ENCODE measurements at regions of chr5 and their contacts with region 1.

Region 1: DNA sequence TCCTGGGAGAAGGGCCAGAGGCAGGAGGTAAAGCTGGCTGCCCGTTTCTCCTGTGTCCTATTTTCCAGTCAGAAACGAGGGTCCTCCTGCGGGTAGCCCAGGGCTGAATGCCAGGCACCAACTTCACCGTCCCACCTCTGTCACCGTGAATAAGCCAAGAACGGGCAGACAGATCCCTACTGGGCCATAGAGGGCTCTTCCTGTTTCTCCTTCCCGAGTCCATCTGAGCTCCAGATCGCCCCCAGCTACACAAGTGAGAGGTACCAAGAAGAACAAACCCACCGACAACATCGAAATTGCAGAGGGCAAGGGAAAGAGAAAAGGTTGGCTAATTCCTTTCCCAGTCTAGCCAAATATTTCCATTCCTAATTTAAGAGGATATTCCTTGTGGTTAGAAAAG is 93.7 kb downstream of the SPOCK1 start:
- DNase-seq: no peak
- H3K27ac ChIP-seq: no peak overlapping the region
- CTCF ChIP-seq: no peak

Region 2: GRCh38 chr5:137114529-137114928 is 290.9 kb before region 1 on chr5:
- CTCF ChIA-PET with region 1: no interaction called
- POLR2A ChIA-PET with region 1: no interaction called
- DNase-seq: peak; percentile 14
- H3K27ac ChIP-seq: no peak overlapping the region
- CTCF ChIP-seq: no peak

Region 3: GRCh38 chr5:137431051-137431450 is 25.7 kb after region 1 on chr5:
- CTCF ChIA-PET with region 1: no interaction called
- POLR2A ChIA-PET with region 1: interaction called, 13 read pairs
- DNase-seq: no peak
- H3K27ac ChIP-seq: no peak overlapping the region
- CTCF ChIP-seq: no peak

Measured in RWPE1 (cell line).